Astrocyte of the cerebellum (primary cell): ENCODE measurements at regions of chr6 and their contacts with region 1.

Region 1: GRCh38 chr6:135506270-135506997 is 8.9 kb upstream of the AHI1 start:
- DNase-seq: peak; percentile 54
- H3K4me3 ChIP-seq: no peak overlapping the region
- CTCF ChIP-seq: peak; percentile 41

Region 2: GRCh38 chr6:135411339-135411738 is 95.1 kb before region 1 on chr6:
- in situ Hi-C with region 1: no loop called
- DNase-seq: no peak
- H3K4me3 ChIP-seq: no peak overlapping the region
- CTCF ChIP-seq: peak; percentile 6

Region 3: GRCh38 chr6:135577059-135577538 is 70.7 kb after region 1 on chr6:
- in situ Hi-C with region 1: no loop called
- DNase-seq: no peak
- H3K4me3 ChIP-seq: no peak overlapping the region
- CTCF ChIP-seq: no peak

Region 4: DNA sequence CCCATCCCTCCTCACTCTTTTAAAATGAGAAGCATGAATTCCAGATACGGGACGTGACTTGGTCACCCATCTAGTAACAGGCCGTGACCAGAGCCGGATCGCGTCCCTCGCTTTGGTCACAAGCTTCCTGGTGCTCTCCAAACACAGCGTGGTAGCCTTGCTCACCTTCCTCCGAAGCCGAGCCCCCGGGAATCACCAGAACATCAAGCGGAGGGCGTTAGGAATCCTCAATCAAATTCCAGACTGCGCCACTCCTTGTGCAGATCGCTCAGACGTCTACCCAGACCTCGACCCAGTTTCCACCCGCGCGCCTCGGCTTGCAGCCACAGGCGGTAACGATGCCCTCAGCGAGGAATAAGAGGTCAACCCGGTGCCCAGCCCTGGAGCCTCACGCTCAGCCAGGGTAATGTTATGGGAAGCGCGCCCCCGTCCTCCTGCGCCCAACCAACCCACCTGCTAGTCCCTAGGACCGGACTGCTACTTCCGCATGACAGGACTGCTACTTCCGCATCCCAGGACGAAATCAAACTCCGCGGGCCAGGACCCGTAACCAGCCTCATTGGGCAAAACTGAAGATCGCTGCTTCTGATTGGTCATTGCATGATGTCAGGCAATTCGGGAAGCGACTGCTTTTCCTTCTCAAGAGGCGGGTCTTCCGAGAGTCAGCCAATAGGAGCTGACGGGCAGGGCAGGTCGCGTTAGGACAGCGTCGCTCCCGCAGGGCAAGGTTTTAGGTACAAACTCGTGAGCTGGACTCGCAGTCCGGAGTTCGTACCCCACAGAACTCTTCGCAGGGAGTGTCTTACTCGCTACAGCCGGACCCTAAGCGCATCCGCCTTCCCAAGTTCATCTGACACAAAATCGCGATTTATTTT is 743.6 kb after region 1 on chr6 and contains the start of gene MTFR2:
- in situ Hi-C with region 1: loop called (anchors 25 kb)
- DNase-seq: peak; percentile 99
- H3K4me3 ChIP-seq: peak within 1 kb of the TSS; percentile 66
- CTCF ChIP-seq: no peak